AG04450 (cell line): ENCODE measurements at regions of chr18 and their contacts with region 1.

Region 1: GRCh38 chr18:36284671-36285295 is 12.7 kb upstream of the FHOD3 start:
- DNase-seq: peak; percentile 47
- H3K4me3 ChIP-seq: no peak overlapping the region
- H3K27ac ChIP-seq: no peak overlapping the region
- H3K27me3 ChIP-seq: no peaks in the 10 kb centered on the region
- CTCF ChIP-seq: peak; percentile 91

Region 2: GRCh38 chr18:35756506-35757117 is 528.2 kb before region 1 on chr18:
- CTCF ChIA-PET with region 1: interaction called, 16 read pairs
- POLR2A ChIA-PET with region 1: no interaction called
- DNase-seq: peak; percentile 6
- H3K4me3 ChIP-seq: no peak overlapping the region
- H3K27ac ChIP-seq: no peak overlapping the region
- H3K27me3 ChIP-seq: peaks cover 3% of the 10 kb centered on the region
- CTCF ChIP-seq: peak; percentile 83

Region 3: GRCh38 chr18:36015629-36016028 is 269.2 kb before region 1 on chr18:
- CTCF ChIA-PET with region 1: interaction called, 86 read pairs
- POLR2A ChIA-PET with region 1: no interaction called
- DNase-seq: no peak
- H3K4me3 ChIP-seq: no peak overlapping the region
- H3K27ac ChIP-seq: no peak overlapping the region
- H3K27me3 ChIP-seq: no peaks in the 10 kb centered on the region
- CTCF ChIP-seq: no peak

Region 4: GRCh38 chr18:36073686-36074085 is 211.1 kb before region 1 on chr18:
- CTCF ChIA-PET with region 1: interaction called, 10 read pairs
- POLR2A ChIA-PET with region 1: no interaction called
- DNase-seq: no peak
- H3K4me3 ChIP-seq: no peak overlapping the region
- H3K27ac ChIP-seq: no peak overlapping the region
- H3K27me3 ChIP-seq: no peaks in the 10 kb centered on the region
- CTCF ChIP-seq: no peak

Region 5: GRCh38 chr18:36095936-36096519 is 188.8 kb before region 1 on chr18:
- CTCF ChIA-PET with region 1: interaction called, 148 read pairs
- POLR2A ChIA-PET with region 1: no interaction called
- DNase-seq: peak; percentile 54
- H3K4me3 ChIP-seq: no peak overlapping the region
- H3K27ac ChIP-seq: no peak overlapping the region
- H3K27me3 ChIP-seq: no peaks in the 10 kb centered on the region
- CTCF ChIP-seq: peak; percentile 55

Region 6: GRCh38 chr18:36128530-36129299 is 156.1 kb before region 1 on chr18:
- CTCF ChIA-PET with region 1: interaction called, 10 read pairs
- POLR2A ChIA-PET with region 1: no interaction called
- DNase-seq: no peak
- H3K4me3 ChIP-seq: peak overlapping the region; percentile 97
- H3K27ac ChIP-seq: peak overlapping the region; percentile 100
- H3K27me3 ChIP-seq: no peaks in the 10 kb centered on the region
- CTCF ChIP-seq: no peak

Region 7: GRCh38 chr18:36572135-36572856 is 287.5 kb after region 1 on chr18:
- CTCF ChIA-PET with region 1: interaction called, 10 read pairs
- POLR2A ChIA-PET with region 1: no interaction called
- DNase-seq: no peak
- H3K4me3 ChIP-seq: no peak overlapping the region
- H3K27ac ChIP-seq: no peak overlapping the region
- H3K27me3 ChIP-seq: no peaks in the 10 kb centered on the region
- CTCF ChIP-seq: peak; percentile 78